Activated naive CD4-positive, alpha-beta T cell treated with anti-CD3 and anti-CD28 coated beads, Interleukin-2, amount 10 ng/mL, durations not matched to agents 7 days and 5 days (primary cell): ENCODE measurements at regions of chr14 and their contacts with region 1.

Region 1: GRCh38 chr14:66359500-66359899 is 126.7 kb upstream of the CCDC196 start:
- DNase-seq: no peak
- H3K4me3 Mint-ChIP-seq: no peak overlapping the region
- H3K27ac Mint-ChIP-seq: no peak overlapping the region
- H3K4me1 Mint-ChIP-seq: no peaks in the 10 kb centered on the region
- H3K27me3 Mint-ChIP-seq: peaks cover 26% of the 10 kb centered on the region

Region 2: GRCh38 chr14:66395300-66395699 is 35.8 kb after region 1 on chr14:
- CTCF ChIA-PET with region 1: interaction called, 56 read pairs
- DNase-seq: peak; percentile 50
- H3K4me3 Mint-ChIP-seq: no peak overlapping the region
- H3K27ac Mint-ChIP-seq: no peak overlapping the region
- H3K4me1 Mint-ChIP-seq: peaks cover 6% of the 10 kb centered on the region
- H3K27me3 Mint-ChIP-seq: peaks cover 4% of the 10 kb centered on the region

Region 3: DNA sequence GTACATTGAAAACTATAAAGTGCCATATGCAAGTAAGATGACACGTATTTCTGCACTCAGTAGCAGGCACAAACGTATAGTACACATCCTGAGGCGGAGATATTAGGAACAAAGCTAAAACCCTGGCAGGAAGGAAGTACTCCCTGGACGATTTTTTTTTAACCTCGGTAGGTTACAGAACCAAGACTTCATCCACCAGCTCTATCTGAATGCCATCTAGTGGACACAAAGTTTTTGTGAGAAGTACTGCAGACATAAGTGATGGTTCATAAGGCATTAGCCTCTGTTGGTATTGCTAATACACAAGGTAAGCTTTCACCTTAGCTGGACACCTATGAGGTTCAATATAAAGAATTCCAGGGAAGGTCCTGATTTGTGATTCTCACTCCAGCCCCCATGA is 43.7 kb after region 1 on chr14:
- CTCF ChIA-PET with region 1: interaction called, 37 read pairs
- DNase-seq: no peak
- H3K4me3 Mint-ChIP-seq: no peak overlapping the region
- H3K27ac Mint-ChIP-seq: no peak overlapping the region
- H3K4me1 Mint-ChIP-seq: no peaks in the 10 kb centered on the region
- H3K27me3 Mint-ChIP-seq: no peaks in the 10 kb centered on the region

Region 4: GRCh38 chr14:66453469-66453868 is 94.0 kb after region 1 on chr14:
- CTCF ChIA-PET with region 1: no interaction called
- DNase-seq: no peak
- H3K4me3 Mint-ChIP-seq: no peak overlapping the region
- H3K27ac Mint-ChIP-seq: no peak overlapping the region
- H3K4me1 Mint-ChIP-seq: no peaks in the 10 kb centered on the region
- H3K27me3 Mint-ChIP-seq: no peaks in the 10 kb centered on the region

Region 5: DNA sequence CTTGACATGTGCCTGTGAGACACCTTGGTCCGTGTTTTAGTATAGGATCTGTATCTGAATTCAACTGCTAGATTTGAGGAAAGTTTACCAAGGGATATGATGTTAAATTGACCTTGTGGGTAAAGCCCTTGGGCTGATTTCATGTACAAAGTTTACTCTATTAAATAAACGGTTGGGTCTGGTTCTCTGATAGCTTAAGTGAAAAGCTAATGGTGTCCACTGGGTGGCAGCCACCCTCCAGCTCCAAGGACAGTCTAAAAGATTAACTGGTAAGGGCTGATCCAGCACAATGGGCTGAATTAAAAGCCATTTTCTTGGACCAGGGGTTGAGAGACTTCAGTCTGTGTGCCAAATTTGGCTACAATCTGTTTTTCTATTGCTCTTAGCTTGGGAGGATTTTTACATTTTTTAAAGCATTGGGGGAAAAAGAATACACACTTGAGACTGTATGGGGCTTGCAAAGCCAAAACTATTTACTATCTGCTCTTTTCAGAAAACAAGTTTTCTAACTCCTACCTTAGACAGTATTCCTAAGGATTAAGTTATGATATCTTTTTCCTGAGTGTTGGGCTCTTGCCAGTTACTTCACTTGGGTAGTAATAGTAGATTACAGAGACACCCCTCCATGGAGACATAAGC is 264.9 kb after region 1 on chr14:
- CTCF ChIA-PET with region 1: interaction called, 11 read pairs
- DNase-seq: peak; percentile 56
- H3K4me3 Mint-ChIP-seq: no peak overlapping the region
- H3K27ac Mint-ChIP-seq: no peak overlapping the region
- H3K4me1 Mint-ChIP-seq: no peaks in the 10 kb centered on the region
- H3K27me3 Mint-ChIP-seq: no peaks in the 10 kb centered on the region